ENCODE measurements at regions of chr7 and their contacts with region 1.

Region 1: DNA sequence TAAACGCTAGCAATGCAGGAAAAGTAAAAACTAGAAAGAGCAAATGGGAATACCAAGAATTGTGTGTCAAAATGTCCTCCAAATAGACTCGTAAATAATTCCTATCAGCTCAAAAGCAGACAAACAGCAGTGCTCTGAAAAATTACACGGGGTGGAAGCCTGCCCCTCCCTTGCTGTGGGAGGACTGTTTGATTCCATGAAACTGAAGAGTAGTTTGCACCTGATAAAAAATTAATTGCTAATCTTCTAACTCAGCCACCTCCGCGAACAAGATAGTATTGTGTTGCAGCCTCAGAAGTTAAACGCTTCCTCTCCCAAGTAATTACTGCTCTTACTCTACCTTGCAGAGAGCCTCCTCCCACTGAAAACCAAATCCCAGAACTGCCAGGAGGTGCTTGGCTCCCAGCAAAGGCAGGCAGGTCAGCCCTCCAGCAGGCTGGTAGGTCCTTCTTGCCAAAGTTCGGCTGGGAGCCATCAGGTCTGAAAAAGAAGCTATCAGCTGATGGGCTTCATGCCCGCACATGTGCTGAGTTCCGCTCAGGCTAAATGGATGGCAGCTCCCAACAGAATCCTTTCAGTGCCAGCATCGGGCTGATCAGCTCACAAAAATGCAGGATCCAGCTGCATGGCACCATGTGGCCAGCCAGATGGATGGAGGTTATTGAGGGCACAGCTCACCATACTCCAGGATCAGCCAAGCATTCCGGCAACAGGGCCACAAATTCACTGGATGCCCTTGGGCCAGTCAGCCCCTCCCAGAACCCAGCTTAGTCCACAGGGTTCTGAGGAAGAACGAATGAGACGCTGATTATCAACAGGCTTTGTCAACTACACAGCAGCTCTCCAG is 37.1 kb downstream of the MAD1L1 start:
- DNase-seq: peak; percentile 73
- ATAC-seq: peak; percentile 70

Region 2: DNA sequence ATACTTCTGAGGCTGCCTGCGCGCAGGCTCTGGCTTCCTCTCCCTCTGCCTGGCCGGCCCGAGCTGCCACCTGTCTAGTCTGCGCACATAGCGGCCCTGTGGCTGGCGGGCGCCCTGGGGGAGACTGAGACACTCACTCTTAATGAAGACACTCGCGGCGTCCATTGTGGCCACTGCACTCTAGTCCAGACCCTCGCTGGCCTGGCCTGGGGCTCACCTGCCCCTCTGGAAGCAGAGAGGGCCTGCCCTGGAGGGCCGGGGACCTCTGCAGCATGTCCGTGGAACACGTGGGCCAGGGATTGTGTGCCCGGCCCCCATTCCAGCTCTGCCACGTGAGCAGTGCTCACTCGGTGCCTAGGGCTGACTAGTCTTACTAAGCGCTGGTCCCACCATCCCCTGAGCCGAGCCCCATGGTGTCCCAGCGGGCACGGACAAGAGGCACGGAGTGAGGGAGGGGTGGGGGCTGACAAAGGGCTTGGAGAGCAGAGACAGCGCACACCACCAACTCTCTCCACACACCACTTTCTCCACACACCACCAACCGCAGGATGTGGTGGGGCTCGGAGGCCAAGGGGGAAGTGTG is 376.3 kb before region 1 on chr7:
- intact Hi-C with region 1: no loop called
- DNase-seq: no peak
- ATAC-seq: no peak

Region 3: GRCh38 chr7:2104107-2104710 is 91.4 kb before region 1 on chr7:
- intact Hi-C with region 1: loop called (anchors 5 kb)
- DNase-seq: peak; percentile 93
- ATAC-seq: peak; percentile 90